AG04449 (cell line): ENCODE measurements at regions of chr3 and their contacts with region 1.

Region 1: GRCh38 chr3:100254168-100254777 is 6.5 kb upstream of the TBC1D23 start:
- DNase-seq: peak; percentile 44
- H3K4me3 ChIP-seq: no peak overlapping the region
- CTCF ChIP-seq: peak; percentile 64

Region 2: DNA sequence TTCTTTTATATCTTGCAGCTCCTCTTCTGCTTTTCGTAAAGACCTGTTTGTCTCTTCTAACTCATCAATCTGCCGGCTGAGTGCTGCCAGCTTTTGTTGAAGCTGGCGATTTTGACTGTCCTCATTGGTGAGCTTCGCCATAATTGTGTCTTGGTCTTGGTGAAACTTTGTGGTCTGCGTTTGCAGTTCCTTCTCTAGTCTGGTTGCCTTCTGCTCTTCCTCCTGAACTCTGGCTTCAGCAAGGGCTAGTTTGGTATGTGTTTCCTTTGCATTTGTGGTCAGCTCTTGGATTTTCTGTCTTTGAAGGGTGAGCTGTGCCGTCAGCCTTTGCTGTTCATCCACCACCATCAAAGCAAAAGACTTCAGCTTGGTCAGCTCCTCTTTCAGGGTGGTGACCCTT is 403.7 kb before region 1 on chr3:
- CTCF ChIA-PET with region 1: interaction called, 16 read pairs
- POLR2A ChIA-PET with region 1: no interaction called
- DNase-seq: no peak
- H3K4me3 ChIP-seq: no peak overlapping the region
- CTCF ChIP-seq: no peak

Region 3: GRCh38 chr3:100020876-100021644 is 233.2 kb before region 1 on chr3:
- CTCF ChIA-PET with region 1: interaction called, 11 read pairs
- POLR2A ChIA-PET with region 1: no interaction called
- DNase-seq: no peak
- H3K4me3 ChIP-seq: no peak overlapping the region
- CTCF ChIP-seq: no peak

Region 4: GRCh38 chr3:100073899-100074307 is 180.4 kb before region 1 on chr3:
- CTCF ChIA-PET with region 1: interaction called, 54 read pairs
- POLR2A ChIA-PET with region 1: interaction called, 4 read pairs
- DNase-seq: peak; percentile 82
- H3K4me3 ChIP-seq: no peak overlapping the region
- CTCF ChIP-seq: no peak